Cardiac septum (tissue), 1 donor: ENCODE measurements at regions of chr12 and their contacts with region 1.

Region 1: GRCh38 chr12:132761032-132761920 is at the start of gene ANKLE2:
- DNase-seq: no peak
- total RNA-seq, gene ANKLE2: 31.4 TPM

Region 2: DNA sequence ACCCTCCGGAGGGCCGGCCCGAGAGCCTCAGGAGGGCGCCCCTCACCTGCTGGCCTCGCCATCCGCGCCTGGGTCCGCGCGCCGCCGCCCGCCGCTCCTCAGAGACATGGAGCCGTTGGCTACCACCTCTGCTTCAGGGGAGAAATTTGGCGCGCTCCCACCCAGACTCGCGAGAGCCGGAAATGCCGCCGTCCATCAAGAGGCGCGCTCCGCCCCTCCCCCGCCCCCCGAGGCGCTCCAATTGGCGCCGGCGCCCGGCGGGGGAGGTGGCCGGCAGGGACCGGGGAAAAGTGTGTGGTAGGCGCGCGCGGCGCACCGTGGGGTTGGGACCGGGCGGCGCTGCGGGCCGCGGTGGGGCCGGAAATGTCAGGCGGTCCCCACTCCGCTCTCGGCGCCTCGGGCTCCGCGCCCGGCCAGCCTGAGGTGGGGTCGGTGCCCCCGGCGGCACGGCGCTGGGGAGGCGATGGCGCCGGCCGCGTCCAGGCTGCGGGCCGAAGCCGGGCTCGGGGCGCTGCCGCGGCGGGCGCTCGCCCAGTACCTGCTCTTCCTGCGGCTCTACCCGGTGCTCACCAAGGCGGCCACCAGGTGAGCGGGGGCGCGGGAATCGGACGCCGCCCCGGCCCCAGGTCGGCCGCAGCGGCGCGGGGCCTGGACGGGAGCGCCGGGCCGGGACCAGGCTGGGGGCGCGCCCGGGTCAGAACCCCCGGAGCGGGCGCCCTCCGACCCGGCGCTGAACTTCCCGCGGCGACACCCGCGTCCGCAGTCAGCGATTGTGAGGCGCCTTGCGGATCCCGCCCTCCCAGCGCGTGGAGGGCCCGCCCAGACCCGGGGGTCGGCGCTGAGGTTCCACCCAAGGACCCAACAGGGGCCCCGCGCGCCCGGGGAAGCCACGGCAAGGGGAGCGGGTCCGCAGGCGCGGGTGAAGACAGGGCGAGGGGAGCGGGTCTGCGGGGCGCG is 73.8 kb before region 1 on chr12 and contains the starts of genes POLE and PXMP2:
- intact Hi-C with region 1: loop called (anchors 5 kb)
- DNase-seq: peak; percentile 95
- total RNA-seq, gene POLE: 12.1 TPM
- total RNA-seq, gene PXMP2: 36.5 TPM

Region 3: DNA sequence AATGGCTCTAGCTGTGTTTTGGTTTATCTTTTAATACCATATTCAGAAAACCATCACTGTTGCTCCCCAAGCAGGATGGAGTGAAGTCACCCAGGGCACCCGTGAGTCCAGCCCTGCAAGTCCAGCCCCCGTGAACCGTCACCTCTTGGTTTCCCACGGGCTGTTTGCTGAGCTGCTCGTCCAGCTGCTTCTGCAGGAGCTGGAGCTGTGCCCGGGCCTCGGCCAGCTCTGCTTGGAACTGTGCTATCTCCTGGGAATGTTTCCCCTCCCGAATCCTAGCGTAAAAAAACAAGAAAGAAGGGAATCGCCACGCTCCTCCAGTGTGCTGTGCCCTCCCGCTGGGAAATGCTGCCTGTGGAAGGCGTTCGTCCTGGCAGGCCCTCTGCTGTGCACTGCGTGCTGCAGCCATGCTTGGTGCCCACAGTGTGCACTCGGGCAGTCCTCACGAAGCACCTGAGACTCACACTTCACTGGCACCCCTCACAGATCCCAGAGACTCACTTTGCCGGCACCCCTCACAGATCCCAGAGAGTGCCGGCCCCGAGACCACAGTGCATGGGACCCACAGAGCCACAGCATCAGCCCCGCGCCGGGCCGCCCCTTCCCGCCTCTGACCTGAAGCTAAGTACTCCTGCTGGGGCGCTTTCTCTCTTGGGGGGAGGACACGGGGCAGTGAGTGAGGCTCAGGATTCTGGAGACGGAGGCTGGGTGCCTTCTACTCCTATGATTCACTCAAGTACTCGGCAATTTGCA is 15.7 kb after region 1 on chr12:
- intact Hi-C with region 1: no loop called
- DNase-seq: no peak